ENCODE measurements at regions of chr1 and their contacts with region 1.

Region 1: GRCh38 chr1:64882574-64883255 is 83.6 kb downstream of the JAK1 start:
- DNase-seq: peak; percentile 45 to 60
- ATAC-seq: peak; percentile 73 to 88 (median 85)
- H3K4me3 ChIP-seq: no peak overlapping the region
- H3K4me3 Mint-ChIP-seq: peak overlapping the region; percentile 75
- H3K27ac ChIP-seq: peak overlapping the region; percentile 80
- H3K27ac Mint-ChIP-seq: peak overlapping the region; percentile 79 to 93
- H3K4me1 ChIP-seq: peaks cover 70% of the 10 kb centered on the region
- H3K4me1 Mint-ChIP-seq: peaks cover 94 to 98% of the 10 kb centered on the region in 2 donors
- H3K27me3 ChIP-seq: no peaks in the 10 kb centered on the region
- H3K27me3 Mint-ChIP-seq: no peaks in the 10 kb centered on the region
- CTCF ChIP-seq: no peak

Region 2: DNA sequence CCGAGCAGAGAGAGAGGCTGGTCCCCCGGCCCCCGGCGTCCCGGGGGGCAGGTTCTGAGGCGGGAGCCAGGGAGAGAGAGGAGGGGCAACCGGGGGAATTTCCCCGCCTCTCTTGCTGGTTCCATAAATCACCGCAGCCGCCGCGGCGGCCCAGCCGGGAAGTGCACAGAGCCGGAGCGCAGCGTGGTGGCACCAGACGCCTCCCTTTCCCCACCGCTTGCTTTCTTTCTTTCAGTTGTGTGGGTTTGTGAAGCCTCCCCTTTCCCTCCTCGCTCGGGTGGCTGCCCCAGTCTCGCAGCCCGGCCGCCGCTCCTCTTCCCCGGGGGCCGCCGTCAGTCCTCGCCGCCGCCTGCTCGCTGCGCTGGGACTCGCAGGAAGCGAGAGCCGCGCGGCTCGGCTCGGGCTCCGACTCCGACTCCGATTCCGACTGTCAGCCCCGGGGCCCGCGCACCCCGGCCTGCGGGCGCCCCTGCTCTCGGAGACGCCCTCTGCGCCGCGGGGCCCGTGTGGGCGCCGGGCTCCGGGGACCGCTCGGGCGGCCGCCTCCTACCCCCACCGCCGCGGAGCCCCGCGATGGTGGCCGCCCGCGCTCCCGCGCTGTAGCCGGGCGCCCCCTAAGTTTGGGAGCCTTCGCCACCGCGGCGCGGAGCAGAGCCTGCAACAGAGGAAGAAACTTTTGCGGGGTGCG is 412.6 kb before region 1 on chr1 and contains the start of gene CACHD1:
- intact Hi-C with region 1: no loop called
- DNase-seq: peak in 1 of 2 donors; percentile 82
- ATAC-seq: peak in 2 of 3 donors; percentile 17 to 69
- H3K4me3 ChIP-seq: no peak within 1 kb of the TSS
- H3K4me3 Mint-ChIP-seq: peak within 1 kb of the TSS; percentile 58
- H3K27ac ChIP-seq: no peak within 1 kb of the TSS
- H3K27ac Mint-ChIP-seq: no peak within 1 kb of the TSS
- H3K4me1 ChIP-seq: peaks cover 14% of the 10 kb centered on the region
- H3K4me1 Mint-ChIP-seq: peaks cover 10 to 12% of the 10 kb centered on the region in 2 donors
- H3K27me3 ChIP-seq: peaks cover 21% of the 10 kb centered on the region
- H3K27me3 Mint-ChIP-seq: peaks cover 51 to 58% of the 10 kb centered on the region in 2 donors
- CTCF ChIP-seq: no peak
- total RNA-seq, gene CACHD1: not detected

Region 3: DNA sequence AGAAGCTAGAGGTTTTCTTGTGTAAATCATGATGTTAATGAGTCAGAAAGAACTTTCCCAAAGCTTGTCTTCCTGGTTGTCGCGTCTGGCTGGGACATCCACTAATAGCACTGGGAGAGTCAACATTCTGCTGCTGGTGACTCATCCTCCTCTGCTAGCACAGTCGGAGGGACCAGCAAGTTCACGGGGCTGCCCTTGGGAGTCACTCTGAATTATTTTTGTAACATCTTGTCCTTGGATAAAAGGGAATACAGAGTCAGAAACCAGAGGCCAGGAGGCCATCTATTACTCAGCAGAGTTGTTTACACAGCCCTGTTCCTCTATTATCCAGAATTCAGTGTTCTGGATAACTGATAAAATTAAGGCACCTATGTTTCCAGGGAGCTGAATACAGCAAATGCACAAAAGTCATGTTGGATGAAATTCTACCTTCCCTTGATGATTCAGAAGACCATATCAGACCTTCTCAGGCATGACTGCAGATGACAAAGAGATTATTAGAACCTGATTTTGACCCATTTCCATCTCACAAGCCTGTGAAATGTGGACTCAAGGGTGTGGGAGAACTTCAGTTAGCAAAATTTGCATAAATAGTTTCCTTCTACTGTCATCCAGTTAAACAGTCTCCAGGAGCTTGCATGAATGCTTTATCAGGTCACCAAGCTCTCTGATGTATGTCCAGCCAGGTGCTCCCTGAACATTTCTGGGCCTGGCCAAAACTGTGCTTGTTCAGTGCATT is 15.6 kb after region 1 on chr1:
- intact Hi-C with region 1: loop called (anchors 2 kb)
- DNase-seq: peak; percentile 44 to 49
- ATAC-seq: peak; percentile 52 to 72 (median 72)
- H3K4me3 ChIP-seq: no peak overlapping the region
- H3K4me3 Mint-ChIP-seq: peak overlapping the region; percentile 7
- H3K27ac ChIP-seq: peak overlapping the region; percentile 51
- H3K27ac Mint-ChIP-seq: peak overlapping the region; percentile 86 to 93
- H3K4me1 ChIP-seq: peaks cover 53% of the 10 kb centered on the region
- H3K4me1 Mint-ChIP-seq: peaks cover 96 to 99% of the 10 kb centered on the region in 2 donors
- H3K27me3 ChIP-seq: no peaks in the 10 kb centered on the region
- H3K27me3 Mint-ChIP-seq: no peaks in the 10 kb centered on the region
- CTCF ChIP-seq: no peak

Region 4: GRCh38 chr1:65009724-65010420 is 127.2 kb after region 1 on chr1:
- intact Hi-C with region 1: loop called (anchors 5 kb)
- DNase-seq: peak in 1 of 2 donors; percentile 19
- ATAC-seq: peak; percentile 52 to 69 (median 55)
- H3K4me3 ChIP-seq: no peak overlapping the region
- H3K4me3 Mint-ChIP-seq: peak overlapping the region; percentile 61
- H3K27ac ChIP-seq: peak overlapping the region; percentile 14
- H3K27ac Mint-ChIP-seq: peak overlapping the region; percentile 68 to 79
- H3K4me1 ChIP-seq: peaks cover 33% of the 10 kb centered on the region
- H3K4me1 Mint-ChIP-seq: peaks cover 42 to 45% of the 10 kb centered on the region in 2 donors
- H3K27me3 ChIP-seq: no peaks in the 10 kb centered on the region
- H3K27me3 Mint-ChIP-seq: no peaks in the 10 kb centered on the region
- CTCF ChIP-seq: no peak

Measured in natural killer cell (primary cell).